ENCODE measurements at regions of chr12 and their contacts with region 1.

Region 1: DNA sequence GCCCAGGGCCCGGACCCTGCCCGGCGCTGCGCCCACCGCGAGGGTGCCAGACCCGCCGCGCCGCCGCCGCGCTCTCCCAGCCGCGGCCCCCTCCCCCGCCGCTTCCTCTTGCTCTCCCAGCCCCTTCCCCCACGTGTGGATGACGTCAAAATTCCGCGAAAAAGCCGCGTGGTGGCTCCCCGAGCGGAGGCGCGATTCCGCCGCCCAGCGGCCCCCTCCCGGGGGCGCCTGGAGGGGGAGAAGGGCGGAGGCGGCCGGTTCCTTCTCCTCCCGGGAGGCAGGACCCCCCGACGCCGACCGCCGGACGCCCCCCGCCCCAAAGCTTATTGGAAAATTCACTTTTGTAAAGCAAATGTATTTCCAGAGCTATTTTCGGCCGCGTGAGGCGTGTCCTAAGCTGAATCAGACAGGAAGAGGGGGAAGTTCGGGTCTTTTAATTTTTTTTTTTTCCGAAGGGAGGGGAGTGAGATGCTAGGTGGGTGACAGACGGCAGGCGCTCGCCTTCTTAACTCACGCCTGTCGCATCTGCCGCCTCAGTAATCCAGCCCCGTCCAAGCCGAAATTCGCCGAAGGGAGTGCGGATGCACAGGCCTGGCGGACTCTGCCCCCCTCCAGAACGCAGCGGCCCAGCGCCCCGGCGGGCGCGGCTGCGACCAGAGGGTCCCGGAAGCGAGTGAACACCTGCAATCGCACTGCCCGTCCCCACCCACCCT is 4.1 kb upstream of the CCND2 start:
- DNase-seq: peak; percentile 91 to 96 (median 93)
- H3K4me3 ChIP-seq: peak overlapping the region; percentile 79 to 84
- H3K4me3 Mint-ChIP-seq: peak overlapping the region; percentile 96 to 100 (median 98)
- H3K27ac ChIP-seq: peak overlapping the region; percentile 91
- H3K27ac Mint-ChIP-seq: peak overlapping the region; percentile 95 to 100 (median 98)
- H3K4me1 ChIP-seq: peaks cover 34% of the 10 kb centered on the region
- H3K4me1 Mint-ChIP-seq: peaks cover 13 to 49% (median 19%) of the 10 kb centered on the region in 4 donors
- H3K27me3 ChIP-seq: no peaks in the 10 kb centered on the region
- H3K27me3 Mint-ChIP-seq: peaks cover 1 to 6% of the 10 kb centered on the region in 2 donors

Region 2: DNA sequence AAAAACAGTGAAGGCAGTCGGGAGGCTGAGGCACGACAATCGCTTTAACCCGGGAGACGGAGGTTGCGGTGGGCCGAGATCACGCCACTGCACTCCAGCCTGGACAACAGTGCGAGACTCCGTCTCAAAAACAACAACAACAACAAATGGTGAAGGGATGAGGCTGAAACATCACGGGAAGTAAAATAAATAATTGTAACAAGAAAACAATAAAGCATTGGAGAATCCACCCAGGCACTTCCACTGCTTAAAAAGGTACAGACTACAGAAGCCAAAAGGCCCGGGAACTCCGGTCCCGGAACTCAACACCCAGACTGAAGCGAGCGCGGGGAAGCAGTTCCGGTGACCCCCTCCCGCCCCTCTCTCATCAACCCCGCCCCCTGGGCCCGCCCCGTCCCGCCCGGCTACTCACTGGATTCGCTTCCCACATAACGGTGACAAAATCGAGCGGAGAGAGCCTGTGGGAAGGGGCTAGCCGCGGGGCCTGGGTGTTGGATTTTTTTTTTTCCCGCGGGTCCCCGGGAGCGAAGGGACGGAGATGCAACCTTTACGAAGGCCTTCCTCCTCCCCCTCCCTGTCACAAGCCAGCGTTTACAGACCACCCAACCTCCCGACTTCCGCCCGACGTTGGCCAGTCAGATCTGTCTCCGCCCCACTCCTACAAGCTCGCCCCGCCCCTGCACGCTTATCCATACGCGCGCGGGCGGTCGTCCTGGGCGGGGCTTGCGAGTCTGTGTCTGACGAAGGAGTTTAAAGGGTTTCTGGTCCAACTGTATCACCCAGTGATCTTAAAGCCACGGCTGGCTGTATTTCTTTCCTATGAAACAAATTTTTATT is 396.4 kb before region 1 on chr12 and contains the start of gene PARP11:
- CTCF ChIA-PET with region 1: interaction called, 4 read pairs
- POLR2A ChIA-PET with region 1: interaction called, 12 read pairs
- intact Hi-C with region 1: loop called (anchors 1 kb)
- DNase-seq: peak; percentile 97 to 98 (median 97)
- H3K4me3 ChIP-seq: peak within 1 kb of the TSS; percentile 53 to 87
- H3K4me3 Mint-ChIP-seq: peak within 1 kb of the TSS; percentile 95 to 99 (median 98)
- H3K27ac ChIP-seq: peak within 1 kb of the TSS; percentile 95
- H3K27ac Mint-ChIP-seq: peak within 1 kb of the TSS; percentile 95 to 100 (median 99)
- H3K4me1 ChIP-seq: peaks cover 50% of the 10 kb centered on the region
- H3K4me1 Mint-ChIP-seq: peaks cover 34 to 57% (median 40%) of the 10 kb centered on the region in 4 donors
- H3K27me3 ChIP-seq: no peaks in the 10 kb centered on the region
- H3K27me3 Mint-ChIP-seq: no peaks in the 10 kb centered on the region
- total RNA-seq, gene PARP11: 36.4 to 39.9 TPM

Region 3: GRCh38 chr12:4107436-4107878 is 162.0 kb before region 1 on chr12:
- CTCF ChIA-PET with region 1: interaction called, 128 read pairs
- POLR2A ChIA-PET with region 1: interaction called, 11 read pairs
- intact Hi-C with region 1: no loop called
- DNase-seq: peak; percentile 78 to 87 (median 83)
- H3K4me3 ChIP-seq: no peak overlapping the region
- H3K4me3 Mint-ChIP-seq: peak overlapping the region in 7 of 8 donors; percentile 26 to 67 (median 47)
- H3K27ac ChIP-seq: no peak overlapping the region
- H3K27ac Mint-ChIP-seq: peak overlapping the region in 6 of 7 donors; percentile 80 to 94 (median 92)
- H3K4me1 ChIP-seq: peaks cover 10% of the 10 kb centered on the region
- H3K4me1 Mint-ChIP-seq: peaks cover 8 to 15% (median 11%) of the 10 kb centered on the region in 4 donors
- H3K27me3 ChIP-seq: no peaks in the 10 kb centered on the region
- H3K27me3 Mint-ChIP-seq: peaks cover 0 to 2% of the 10 kb centered on the region in 2 donors

Region 4: GRCh38 chr12:4148418-4149056 is 120.9 kb before region 1 on chr12:
- CTCF ChIA-PET with region 1: interaction called, 111 read pairs
- POLR2A ChIA-PET with region 1: interaction called, 253 read pairs
- intact Hi-C with region 1: loop called (anchors 1 kb)
- DNase-seq: peak; percentile 48 to 82 (median 57)
- H3K4me3 ChIP-seq: no peak overlapping the region
- H3K4me3 Mint-ChIP-seq: peak overlapping the region in 2 of 8 donors; percentile 22 to 26
- H3K27ac ChIP-seq: no peak overlapping the region
- H3K27ac Mint-ChIP-seq: peak overlapping the region in 6 of 7 donors; percentile 75 to 97 (median 84)
- H3K4me1 ChIP-seq: peaks cover 69% of the 10 kb centered on the region
- H3K4me1 Mint-ChIP-seq: peaks cover 57 to 90% (median 69%) of the 10 kb centered on the region in 4 donors
- H3K27me3 ChIP-seq: no peaks in the 10 kb centered on the region
- H3K27me3 Mint-ChIP-seq: no peaks in the 10 kb centered on the region

Region 5: DNA sequence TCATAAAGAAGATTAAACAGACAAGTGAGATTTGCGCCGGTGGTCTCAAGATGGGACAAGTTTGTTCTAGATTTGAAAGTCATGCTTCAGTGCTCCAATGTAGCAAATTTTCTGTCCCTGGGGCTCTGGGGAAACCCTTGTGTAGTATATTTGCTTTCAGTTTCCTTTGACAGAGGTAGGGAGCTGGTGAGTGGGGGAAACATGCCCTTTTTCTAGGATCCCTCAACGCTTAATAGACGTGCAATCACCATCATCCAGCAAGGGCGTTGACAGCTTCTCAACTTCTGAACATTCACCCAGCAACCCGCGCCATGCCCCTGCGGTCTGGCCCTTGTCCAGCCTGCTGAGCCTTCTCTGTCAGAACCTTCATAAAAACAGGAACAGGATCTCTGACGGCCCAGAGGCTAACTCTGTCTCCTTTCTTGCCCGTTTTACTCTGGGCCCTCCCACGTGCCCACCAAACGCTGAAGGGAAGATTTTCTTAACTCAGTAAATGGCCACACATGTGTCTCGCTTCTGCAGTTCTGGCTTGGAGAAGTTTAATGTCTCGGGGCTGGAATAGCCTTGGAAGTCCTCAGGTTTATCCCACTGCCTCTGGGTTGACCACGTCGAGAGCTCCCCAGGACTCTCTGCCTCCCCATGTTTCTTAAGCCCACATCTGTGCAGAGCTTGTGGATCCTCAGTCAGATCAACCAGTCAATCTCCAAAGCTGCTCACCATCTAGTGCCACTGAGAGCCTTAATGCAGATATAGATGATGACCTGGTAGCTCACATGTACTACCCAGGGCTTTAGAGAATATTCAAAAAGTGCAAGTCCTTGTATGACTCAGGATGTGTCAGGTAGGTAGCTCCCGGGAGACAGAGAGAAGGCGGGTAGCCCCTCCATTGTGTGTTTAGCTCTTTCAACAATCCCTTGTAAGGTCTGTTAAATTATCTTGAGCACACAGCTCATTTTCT is 53.9 kb before region 1 on chr12:
- CTCF ChIA-PET with region 1: interaction called, 3 read pairs
- POLR2A ChIA-PET with region 1: interaction called, 10 read pairs
- intact Hi-C with region 1: loop called (anchors 5 kb)
- DNase-seq: peak in 4 of 5 donors; percentile 20 to 30 (median 25)
- H3K4me3 ChIP-seq: no peak overlapping the region
- H3K4me3 Mint-ChIP-seq: peak overlapping the region; percentile 55 to 84 (median 64)
- H3K27ac ChIP-seq: no peak overlapping the region
- H3K27ac Mint-ChIP-seq: peak overlapping the region; percentile 24 to 78 (median 44)
- H3K4me1 ChIP-seq: peaks cover 27% of the 10 kb centered on the region
- H3K4me1 Mint-ChIP-seq: peaks cover 15 to 37% (median 28%) of the 10 kb centered on the region in 4 donors
- H3K27me3 ChIP-seq: no peaks in the 10 kb centered on the region
- H3K27me3 Mint-ChIP-seq: no peaks in the 10 kb centered on the region

Region 6: DNA sequence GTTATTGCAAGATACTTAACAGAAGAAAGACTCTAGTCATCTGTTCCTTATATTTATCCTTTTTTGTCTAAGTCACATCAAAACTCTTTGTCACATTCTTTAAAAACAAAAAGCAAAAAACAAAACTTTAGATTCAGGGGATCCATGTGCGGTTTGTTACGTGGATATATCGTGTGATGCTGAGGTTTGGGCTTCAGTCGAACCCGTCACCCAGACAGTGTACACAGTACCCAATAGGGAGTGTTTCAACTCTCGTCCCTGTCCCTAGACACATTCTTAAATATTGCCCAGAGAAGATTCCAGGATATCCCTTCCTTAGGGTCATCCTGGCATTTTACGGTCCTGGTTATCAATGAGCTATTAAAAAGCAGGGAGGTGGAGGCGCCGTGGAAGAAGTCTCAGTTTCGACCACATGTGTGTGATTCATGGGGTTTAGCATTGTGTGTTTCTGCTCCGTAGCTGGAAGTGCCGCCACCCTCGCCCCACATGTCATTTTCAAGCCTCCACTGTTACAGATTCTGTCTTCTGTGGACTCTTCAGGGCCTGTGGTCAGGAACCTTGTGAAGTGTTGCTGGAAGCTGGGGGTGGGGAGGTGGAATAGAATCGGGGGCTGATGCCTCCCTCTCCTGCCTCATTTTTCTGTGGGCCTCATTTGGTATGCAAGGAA is 24.0 kb after region 1 on chr12:
- CTCF ChIA-PET with region 1: no interaction called
- POLR2A ChIA-PET with region 1: interaction called, 13 read pairs
- intact Hi-C with region 1: no loop called
- DNase-seq: peak in 3 of 5 donors; percentile 18 to 20 (median 18)
- H3K4me3 ChIP-seq: peak overlapping the region in 1 of 2 donors; percentile 12
- H3K4me3 Mint-ChIP-seq: peak overlapping the region in 7 of 8 donors; percentile 43 to 84 (median 80)
- H3K27ac ChIP-seq: peak overlapping the region; percentile 56
- H3K27ac Mint-ChIP-seq: peak overlapping the region; percentile 89 to 99 (median 96)
- H3K4me1 ChIP-seq: peaks cover 56% of the 10 kb centered on the region
- H3K4me1 Mint-ChIP-seq: peaks cover 47 to 81% (median 70%) of the 10 kb centered on the region in 4 donors
- H3K27me3 ChIP-seq: no peaks in the 10 kb centered on the region
- H3K27me3 Mint-ChIP-seq: no peaks in the 10 kb centered on the region

Measured in CD4-positive, alpha-beta memory T cell (primary cell).